K562 (cell line): ENCODE measurements at regions of chr22 and their contacts with region 1.

Region 1: GRCh38 chr22:17171313-17172171 is 12.5 kb upstream of the HDHD5 start:
- DNase-seq: peak; percentile 94 to 96 (median 96)
- ATAC-seq: peak; percentile 96
- H3K4me3 ChIP-seq: peak overlapping the region; percentile 69
- H3K27ac ChIP-seq: peak overlapping the region; percentile 72
- H3K4me1 ChIP-seq: peaks cover 0 to 14% of the 10 kb centered on the region in 2 experiments; a peak in 4 of 5 replicates
- H3K27me3 ChIP-seq: peaks cover 3 to 21% of the 10 kb centered on the region in 2 experiments
- CTCF ChIP-seq: peak; percentile 86 to 88 (median 87)
- EP300 ChIP-seq: peak; percentile 5; the same call in 1 of the 2 replicates
- POLR2A ChIP-seq: peak; percentile 65
- RAD21 ChIP-seq: peak in 1 of 2 experiments; percentile 60

Region 2: GRCh38 chr22:16917144-16918003 is 254.2 kb before region 1 on chr22:
- CTCF ChIA-PET with region 1: interaction called, 3 read pairs
- POLR2A ChIA-PET with region 1: no interaction called
- in situ Hi-C with region 1: no loop called
- intact Hi-C with region 1: loop called (anchors 5 kb)
- DNase-seq: peak; percentile 75 to 81 (median 78)
- ATAC-seq: peak; percentile 95
- H3K4me3 ChIP-seq: no peak overlapping the region
- H3K27ac ChIP-seq: no peak overlapping the region
- H3K4me1 ChIP-seq: no peaks in the 10 kb centered on the region
- H3K27me3 ChIP-seq: peaks cover 0 to 4% of the 10 kb centered on the region in 2 experiments; a peak in 1 of 5 replicates
- CTCF ChIP-seq: peak; percentile 77 to 87 (median 83)
- EP300 ChIP-seq: no peak
- POLR2A ChIP-seq: no peak
- RAD21 ChIP-seq: peak; percentile 61 to 80

Region 3: GRCh38 chr22:17074648-17075002 is 96.9 kb before region 1 on chr22:
- CTCF ChIA-PET with region 1: interaction called, 11 read pairs
- POLR2A ChIA-PET with region 1: interaction called, 3 read pairs
- in situ Hi-C with region 1: no loop called
- intact Hi-C with region 1: loop called (anchors 1 kb)
- DNase-seq: no peak
- ATAC-seq: peak; percentile 25; the same call in 1 of the 3 replicates
- H3K4me3 ChIP-seq: no peak overlapping the region
- H3K27ac ChIP-seq: no peak overlapping the region
- H3K4me1 ChIP-seq: peaks cover 0 to 4% of the 10 kb centered on the region in 2 experiments; a peak in 1 of 5 replicates
- H3K27me3 ChIP-seq: no peaks in the 10 kb centered on the region
- CTCF ChIP-seq: no peak
- EP300 ChIP-seq: no peak
- POLR2A ChIP-seq: no peak
- RAD21 ChIP-seq: no peak

Region 4: DNA sequence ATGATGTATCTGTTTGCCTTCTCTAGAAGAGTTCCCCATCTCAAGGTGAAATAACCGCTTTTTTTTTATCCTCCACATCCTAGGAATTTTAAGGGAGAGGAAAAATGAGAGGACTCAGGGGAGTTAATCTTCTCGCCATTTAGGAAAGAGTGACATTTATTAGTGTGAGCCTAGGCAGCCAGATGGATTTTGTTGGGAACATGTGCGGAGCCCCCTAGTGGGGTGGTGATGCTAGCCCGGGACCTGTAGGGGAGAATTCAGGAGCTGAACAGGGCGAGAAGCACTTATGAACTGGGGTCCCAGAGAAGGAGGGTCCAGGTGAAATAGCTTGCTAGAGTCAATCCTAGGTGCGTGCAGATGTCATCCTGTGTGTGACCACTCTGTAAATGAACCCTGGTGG is 76.0 kb before region 1 on chr22:
- CTCF ChIA-PET with region 1: interaction called, 11 read pairs
- POLR2A ChIA-PET with region 1: interaction called, 4 read pairs
- in situ Hi-C with region 1: no loop called
- intact Hi-C with region 1: no loop called
- DNase-seq: peak in 3 of 4 experiments; percentile 31 to 57 (median 57)
- ATAC-seq: peak; percentile 77
- H3K4me3 ChIP-seq: no peak overlapping the region
- H3K27ac ChIP-seq: no peak overlapping the region
- H3K4me1 ChIP-seq: peaks cover 5 to 8% of the 10 kb centered on the region in 2 experiments; a peak in 4 of 5 replicates
- H3K27me3 ChIP-seq: no peaks in the 10 kb centered on the region
- CTCF ChIP-seq: peak; percentile 37 to 51 (median 42); a peak in 3 of 6 replicates
- EP300 ChIP-seq: no peak
- POLR2A ChIP-seq: no peak
- RAD21 ChIP-seq: no peak

Region 5: DNA sequence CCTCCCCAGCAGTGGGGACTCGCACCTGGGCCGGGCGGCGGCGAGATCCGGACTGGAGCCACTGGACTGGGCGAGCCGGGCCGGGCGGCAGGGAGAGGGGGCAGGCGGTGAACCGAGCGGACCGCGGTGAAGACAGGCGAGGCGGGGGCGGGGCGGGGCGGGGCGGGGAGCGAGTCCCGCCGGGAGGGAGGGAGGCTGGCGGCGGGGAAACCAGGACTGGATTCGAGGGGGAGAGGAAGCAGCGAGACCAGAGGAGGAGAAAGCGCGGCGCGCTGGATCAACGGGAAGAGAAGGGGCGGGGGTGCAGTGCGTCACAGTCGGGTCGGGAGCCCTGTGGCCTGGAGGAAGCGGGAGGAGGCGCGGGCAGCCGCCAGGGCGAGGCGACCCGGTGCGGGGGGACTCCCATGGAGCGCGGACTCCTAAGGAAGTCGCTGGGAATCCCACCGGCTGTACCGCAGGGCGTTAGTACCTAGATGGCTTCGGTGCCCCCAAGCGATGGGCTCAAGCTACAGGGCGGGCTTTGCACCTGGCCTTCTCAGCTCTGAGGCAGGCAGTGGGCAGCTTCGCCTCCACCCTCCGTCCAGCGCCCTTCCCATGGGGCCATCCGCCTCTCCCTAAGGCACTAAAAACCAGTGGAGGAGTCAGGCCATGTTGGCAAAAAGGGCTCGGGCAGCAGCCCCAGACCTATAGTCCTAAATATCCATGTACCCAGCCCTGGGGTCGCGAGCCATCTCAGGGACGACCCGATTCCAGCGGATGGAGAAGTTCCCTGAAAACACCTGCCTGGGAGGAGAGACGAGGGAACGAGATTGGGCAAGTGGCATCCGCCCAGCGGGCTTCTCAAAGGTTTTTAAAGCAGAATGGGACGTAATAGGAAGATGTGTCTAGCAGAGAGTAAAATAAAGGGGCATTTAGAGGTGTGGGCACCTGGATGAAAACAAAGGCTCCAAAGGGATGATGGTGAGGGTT is 50.0 kb before region 1 on chr22 and contains the start of gene TMEM121B:
- CTCF ChIA-PET with region 1: no interaction called
- POLR2A ChIA-PET with region 1: no interaction called
- in situ Hi-C with region 1: no loop called
- intact Hi-C with region 1: loop called (anchors 5 kb)
- DNase-seq: peak; percentile 41 to 81 (median 61)
- ATAC-seq: peak; percentile 49
- H3K4me3 ChIP-seq: peak within 1 kb of the TSS; percentile 26
- H3K27ac ChIP-seq: no peak within 1 kb of the TSS
- H3K4me1 ChIP-seq: peaks cover 0 to 25% of the 10 kb centered on the region in 2 experiments; a peak in 2 of 5 replicates
- H3K27me3 ChIP-seq: peaks cover 29 to 62% of the 10 kb centered on the region in 2 experiments
- CTCF ChIP-seq: no peak
- EP300 ChIP-seq: no peak
- POLR2A ChIP-seq: no peak
- RAD21 ChIP-seq: no peak
- polyA plus RNA-seq, gene TMEM121B: 0.03 TPM in 1 of 2 experiments, not detected in the other

Region 6: GRCh38 chr22:17436981-17437412 is 265.5 kb after region 1 on chr22:
- CTCF ChIA-PET with region 1: no interaction called
- POLR2A ChIA-PET with region 1: no interaction called
- in situ Hi-C with region 1: no loop called
- intact Hi-C with region 1: no loop called
- DNase-seq: no peak
- ATAC-seq: no peak; the same call in 2 of the 3 replicates
- H3K4me3 ChIP-seq: no peak overlapping the region
- H3K27ac ChIP-seq: no peak overlapping the region
- H3K4me1 ChIP-seq: no peaks in the 10 kb centered on the region
- H3K27me3 ChIP-seq: peaks cover 0 to 14% of the 10 kb centered on the region in 2 experiments; a peak in 3 of 5 replicates
- CTCF ChIP-seq: no peak
- EP300 ChIP-seq: no peak
- POLR2A ChIP-seq: no peak
- RAD21 ChIP-seq: no peak

Region 7: DNA sequence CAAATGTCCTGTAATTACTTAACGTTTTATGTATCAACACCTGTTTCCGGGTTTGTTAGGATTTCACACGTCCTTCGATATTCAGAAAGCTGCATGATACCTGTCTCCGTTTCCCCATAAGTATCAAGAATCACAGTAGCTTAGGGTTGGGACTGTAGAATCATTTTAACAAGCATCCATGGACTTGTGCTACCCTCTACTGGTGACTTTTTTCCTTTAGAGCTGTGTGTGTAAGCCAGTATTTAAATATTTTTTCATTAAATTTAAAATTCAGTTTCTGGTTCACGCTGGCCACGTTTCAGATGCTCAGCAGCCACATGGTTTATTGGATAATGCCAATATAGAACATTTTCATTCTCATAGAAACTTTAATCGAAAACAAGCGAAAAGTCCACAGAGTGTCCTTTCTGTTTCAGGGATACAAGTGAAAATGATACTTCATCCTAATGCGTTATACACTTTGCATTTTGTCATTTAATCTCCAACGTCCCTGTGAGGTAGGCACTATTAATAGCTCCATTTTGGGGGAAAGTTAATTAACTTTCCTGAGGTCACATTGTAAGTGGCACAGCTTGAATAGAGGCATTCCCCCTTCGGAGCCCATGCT is 330.2 kb after region 1 on chr22:
- CTCF ChIA-PET with region 1: interaction called, 10 read pairs
- POLR2A ChIA-PET with region 1: interaction called, 5 read pairs
- in situ Hi-C with region 1: no loop called
- intact Hi-C with region 1: loop called (anchors 1 kb)
- DNase-seq: peak; percentile 51 to 75 (median 56)
- ATAC-seq: peak; percentile 91
- H3K4me3 ChIP-seq: no peak overlapping the region
- H3K27ac ChIP-seq: no peak overlapping the region
- H3K4me1 ChIP-seq: no peaks in the 10 kb centered on the region
- H3K27me3 ChIP-seq: peaks cover 17 to 31% of the 10 kb centered on the region in 2 experiments
- CTCF ChIP-seq: peak; percentile 67 to 95 (median 68); a peak in 5 of 6 replicates
- EP300 ChIP-seq: no peak
- POLR2A ChIP-seq: no peak
- RAD21 ChIP-seq: peak; percentile 87 to 96